PC-3 (cell line): ENCODE measurements at regions of chr12 and their contacts with region 1.

Region 1: DNA sequence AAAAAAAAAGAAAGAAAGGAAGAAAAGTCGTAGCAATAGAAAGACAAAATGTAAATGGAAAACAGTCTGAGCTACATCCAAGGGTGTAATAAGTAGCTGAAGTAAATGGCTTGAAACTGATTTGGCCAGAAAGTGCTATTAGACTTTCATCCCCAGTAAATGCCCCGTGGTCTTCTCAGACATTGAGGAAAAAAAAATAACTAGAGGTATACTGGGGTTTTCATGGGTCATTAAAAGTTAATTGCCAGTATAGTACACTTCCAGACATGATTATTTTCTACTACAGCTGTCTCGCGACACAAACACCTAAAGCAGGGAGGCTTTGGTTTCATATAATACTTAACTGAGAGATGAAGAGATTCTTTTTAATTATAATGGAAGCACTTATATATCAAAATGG is 271.9 kb downstream of the CPNE8 start:
- DNase-seq: no peak
- ATAC-seq: no peak
- H3K4me3 ChIP-seq: no peak overlapping the region
- H3K27ac ChIP-seq: no peak overlapping the region
- H3K4me1 ChIP-seq: peaks cover 7% of the 10 kb centered on the region; the same call in 1 of the 2 replicates
- H3K27me3 ChIP-seq: no peaks in the 10 kb centered on the region
- CTCF ChIP-seq: no peak

Region 2: DNA sequence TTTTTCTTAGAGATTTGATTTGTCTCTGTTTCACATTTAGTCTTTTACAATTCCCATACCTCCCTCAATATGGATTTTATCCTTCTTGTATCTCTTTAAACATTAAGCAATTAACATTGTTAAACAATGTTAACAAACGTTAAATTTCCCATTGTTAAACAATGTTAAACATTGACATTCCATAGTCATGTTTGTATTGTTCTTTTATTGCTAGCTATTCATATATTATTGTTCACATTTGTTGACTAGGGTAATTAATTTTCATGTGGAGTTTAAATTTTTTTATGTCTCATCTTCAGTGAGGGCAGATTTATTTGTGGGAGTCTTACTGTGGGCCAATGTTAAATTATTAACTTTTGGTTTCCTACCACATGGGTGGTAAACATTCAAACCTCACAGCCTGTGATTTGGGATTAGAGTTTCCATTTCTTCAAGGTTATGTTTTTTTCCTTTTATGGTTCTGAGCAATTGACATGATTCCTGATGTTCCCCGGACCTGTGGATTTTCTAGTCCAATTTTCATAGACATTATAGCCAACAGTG is 22.6 kb before region 1 on chr12:
- CTCF ChIA-PET with region 1: no interaction called
- POLR2A ChIA-PET with region 1: no interaction called
- intact Hi-C with region 1: loop called (anchors 2 kb)
- DNase-seq: no peak
- ATAC-seq: peak; percentile 61
- H3K4me3 ChIP-seq: no peak overlapping the region
- H3K27ac ChIP-seq: no peak overlapping the region
- H3K4me1 ChIP-seq: no peaks in the 10 kb centered on the region
- H3K27me3 ChIP-seq: no peaks in the 10 kb centered on the region
- CTCF ChIP-seq: no peak